CD8-positive, alpha-beta T cell (primary cell): ENCODE measurements at regions of chr6 and their contacts with region 1.

Region 1: GRCh38 chr6:35342258-35343091 is at the start of gene PPARD:
- DNase-seq: peak; percentile 93 to 99 (median 97)
- ATAC-seq: peak; percentile 99
- H3K4me3 ChIP-seq: peak within 1 kb of the TSS; percentile 52 to 57
- H3K4me3 Mint-ChIP-seq: peak within 1 kb of the TSS; percentile 87
- H3K27ac ChIP-seq: peak within 1 kb of the TSS; percentile 75 to 81
- H3K27ac Mint-ChIP-seq: peak within 1 kb of the TSS; percentile 94
- H3K4me1 ChIP-seq: peaks cover 43% of the 10 kb centered on the region
- H3K4me1 Mint-ChIP-seq: peaks cover 50% of the 10 kb centered on the region
- H3K27me3 ChIP-seq: no peaks in the 10 kb centered on the region
- H3K27me3 Mint-ChIP-seq: no peaks in the 10 kb centered on the region
- CTCF ChIP-seq: peak; percentile 90
- total RNA-seq, gene PPARD: 20.0 to 21.5 TPM

Region 2: DNA sequence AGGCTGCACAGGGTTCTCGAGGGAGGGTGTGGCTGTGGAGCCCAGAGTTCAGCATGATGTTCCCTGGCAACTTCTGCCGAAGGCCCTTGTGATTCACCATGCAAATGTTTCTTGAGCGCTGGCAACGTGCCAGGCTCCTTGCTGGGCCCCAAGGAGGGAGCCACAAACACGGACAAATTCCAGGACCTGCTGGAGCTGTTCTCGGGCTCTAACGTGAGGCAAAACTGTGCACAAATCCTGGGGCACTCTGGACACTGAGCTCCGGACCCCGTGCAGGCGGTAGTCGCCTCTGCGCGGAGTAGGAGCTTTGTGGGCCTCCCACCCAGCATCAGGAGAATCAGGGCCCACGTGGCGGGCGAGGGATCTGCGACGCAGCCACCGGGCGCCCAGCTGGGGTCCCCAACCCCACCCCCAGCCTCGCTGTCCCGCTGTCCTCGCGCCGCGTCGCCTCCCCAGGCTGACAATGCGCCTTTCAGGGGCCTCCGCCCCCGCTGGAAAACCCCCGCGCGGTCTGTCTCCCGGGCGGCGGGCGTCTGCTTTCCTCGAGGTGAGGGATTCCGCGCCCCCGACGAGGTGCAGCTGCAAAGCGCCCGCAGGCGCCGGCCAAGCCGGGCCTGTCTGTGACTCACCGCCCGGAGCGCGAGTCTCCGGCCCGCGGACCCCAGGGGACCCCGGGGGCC is 160.4 kb before region 1 on chr6:
- CTCF ChIA-PET with region 1: no interaction called
- POLR2A ChIA-PET with region 1: no interaction called
- intact Hi-C with region 1: no loop called
- DNase-seq: peak in 2 of 9 experiments; percentile 23 to 29
- ATAC-seq: no peak
- H3K4me3 ChIP-seq: no peak overlapping the region
- H3K4me3 Mint-ChIP-seq: no peak overlapping the region
- H3K27ac ChIP-seq: no peak overlapping the region
- H3K27ac Mint-ChIP-seq: no peak overlapping the region
- H3K4me1 ChIP-seq: no peaks in the 10 kb centered on the region
- H3K4me1 Mint-ChIP-seq: no peaks in the 10 kb centered on the region
- H3K27me3 ChIP-seq: no peaks in the 10 kb centered on the region
- H3K27me3 Mint-ChIP-seq: peaks cover 15% of the 10 kb centered on the region
- CTCF ChIP-seq: no peak

Region 3: DNA sequence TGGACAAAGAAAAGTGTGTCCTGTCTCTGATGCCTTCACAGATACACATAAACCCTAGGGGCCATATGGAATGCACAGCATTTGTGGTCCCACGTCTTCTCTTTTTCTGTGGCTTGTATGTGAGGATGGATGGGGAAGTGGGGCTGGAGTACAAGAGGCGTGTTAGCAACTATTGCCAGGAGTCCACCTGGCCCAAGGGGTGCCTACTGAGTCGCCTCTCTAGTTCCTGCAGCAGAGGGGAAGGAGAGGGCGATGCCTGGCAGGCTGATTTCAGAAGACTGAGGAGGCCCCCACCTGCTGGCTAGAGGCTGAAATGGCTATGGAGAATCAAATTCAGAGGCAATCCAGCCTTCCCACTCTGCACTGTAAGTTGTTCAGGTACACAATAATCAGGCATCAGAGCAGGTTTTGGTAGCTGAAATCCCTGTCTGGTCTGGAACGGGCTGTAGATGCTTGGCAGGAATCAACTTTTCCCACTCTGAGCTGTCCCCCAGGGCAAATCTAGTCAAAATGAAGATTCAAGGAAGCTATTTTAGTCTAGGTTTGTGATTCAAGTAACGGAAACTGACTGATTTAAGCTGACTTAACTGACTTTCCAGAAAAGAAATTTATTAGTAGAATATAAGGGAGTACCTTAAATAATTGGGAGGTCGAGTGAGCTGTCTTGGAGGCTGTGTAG is 15.0 kb before region 1 on chr6:
- CTCF ChIA-PET with region 1: interaction called, 14 read pairs
- POLR2A ChIA-PET with region 1: interaction called, 5 read pairs
- intact Hi-C with region 1: loop called in 1 of 2 experiments (anchors 1 kb)
- DNase-seq: peak; percentile 61 to 86 (median 82)
- ATAC-seq: peak; percentile 81
- H3K4me3 ChIP-seq: no peak overlapping the region
- H3K4me3 Mint-ChIP-seq: peak overlapping the region; percentile 42
- H3K27ac ChIP-seq: peak overlapping the region in 1 of 2 experiments; percentile 62
- H3K27ac Mint-ChIP-seq: peak overlapping the region; percentile 88
- H3K4me1 ChIP-seq: peaks cover 19% of the 10 kb centered on the region
- H3K4me1 Mint-ChIP-seq: peaks cover 21% of the 10 kb centered on the region
- H3K27me3 ChIP-seq: no peaks in the 10 kb centered on the region
- H3K27me3 Mint-ChIP-seq: no peaks in the 10 kb centered on the region
- CTCF ChIP-seq: peak; percentile 68

Region 4: DNA sequence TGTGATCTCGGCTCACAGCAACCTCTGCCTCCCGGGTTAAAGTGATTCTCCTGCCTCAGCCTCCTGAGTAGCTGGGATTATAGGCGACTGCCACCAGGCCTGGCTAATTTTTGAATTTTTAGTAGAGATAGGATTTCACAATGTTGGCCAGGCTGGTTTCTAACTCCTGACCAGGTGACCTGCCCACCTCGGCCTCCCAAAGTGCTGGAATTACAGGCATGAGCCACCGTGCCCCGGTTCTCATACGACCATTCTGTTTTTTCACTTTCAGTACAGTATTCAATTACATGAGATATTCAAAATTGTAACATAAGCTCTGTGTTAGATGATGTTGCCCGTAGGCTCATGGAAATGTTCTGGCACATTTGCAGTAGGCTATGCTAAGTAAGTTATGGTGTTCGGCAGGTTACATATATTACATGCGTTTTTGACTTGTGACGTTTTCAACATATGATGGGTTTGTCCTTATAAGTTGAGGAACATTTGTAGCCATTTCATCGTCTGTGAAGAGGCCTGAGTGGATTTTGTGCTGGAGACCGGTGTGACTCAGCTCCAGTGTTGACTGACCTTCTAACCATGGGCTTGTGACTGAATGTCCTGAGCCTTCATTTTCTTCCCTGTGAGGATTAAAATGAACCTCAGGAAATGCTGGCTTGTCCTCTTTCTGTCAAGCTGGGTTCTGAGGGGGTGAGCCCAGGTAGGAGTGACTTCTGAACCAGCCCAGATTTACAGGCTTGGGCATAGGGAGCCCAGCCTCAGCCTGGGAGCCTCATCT is 12.1 kb after region 1 on chr6:
- CTCF ChIA-PET with region 1: interaction called, 18 read pairs
- POLR2A ChIA-PET with region 1: interaction called, 4 read pairs
- intact Hi-C with region 1: no loop called
- DNase-seq: no peak
- ATAC-seq: no peak
- H3K4me3 ChIP-seq: no peak overlapping the region
- H3K4me3 Mint-ChIP-seq: no peak overlapping the region
- H3K27ac ChIP-seq: no peak overlapping the region
- H3K27ac Mint-ChIP-seq: no peak overlapping the region
- H3K4me1 ChIP-seq: peaks cover 27% of the 10 kb centered on the region
- H3K4me1 Mint-ChIP-seq: peaks cover 58% of the 10 kb centered on the region
- H3K27me3 ChIP-seq: no peaks in the 10 kb centered on the region
- H3K27me3 Mint-ChIP-seq: no peaks in the 10 kb centered on the region
- CTCF ChIP-seq: no peak

Region 5: DNA sequence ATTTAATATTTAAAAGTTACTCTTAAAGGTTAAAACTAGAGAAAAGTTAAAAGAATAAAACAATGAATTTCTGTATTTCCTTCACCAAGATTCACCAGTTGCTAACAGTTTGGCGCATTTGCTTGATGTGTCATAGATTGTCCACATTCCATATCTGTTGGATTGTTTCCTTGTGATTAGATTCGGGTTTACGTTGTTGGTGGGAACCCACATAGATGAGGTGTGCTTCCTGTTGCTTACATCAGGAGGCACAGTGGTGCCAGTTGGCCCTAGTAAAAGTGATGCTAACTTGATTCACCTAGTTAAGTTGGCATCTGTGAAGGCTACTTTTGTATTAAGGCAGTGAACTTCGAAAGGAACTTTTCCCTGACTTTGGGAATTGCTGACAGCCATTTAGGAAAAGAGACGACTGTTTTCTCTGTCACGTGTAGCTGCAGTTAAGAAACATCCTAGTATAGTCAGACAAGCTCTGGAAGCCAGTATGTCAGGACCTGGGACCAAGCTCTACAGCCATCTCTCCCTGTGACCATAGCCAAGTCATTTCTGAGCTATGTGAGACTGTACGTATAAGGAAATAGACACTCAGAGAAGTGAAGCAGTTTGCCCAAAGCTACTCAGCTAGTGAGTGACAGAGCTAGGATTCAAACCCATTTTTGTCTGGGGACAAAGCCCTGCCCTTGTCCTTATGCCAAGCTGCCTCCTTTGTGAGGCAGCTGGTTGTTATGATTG is 48.9 kb after region 1 on chr6:
- CTCF ChIA-PET with region 1: interaction called, 3 read pairs
- POLR2A ChIA-PET with region 1: no interaction called
- intact Hi-C with region 1: loop called in 1 of 2 experiments (anchors 10 kb)
- DNase-seq: peak in 3 of 9 experiments; percentile 17 to 64 (median 43)
- ATAC-seq: peak; percentile 83
- H3K4me3 ChIP-seq: no peak overlapping the region
- H3K4me3 Mint-ChIP-seq: no peak overlapping the region
- H3K27ac ChIP-seq: no peak overlapping the region
- H3K27ac Mint-ChIP-seq: peak overlapping the region; percentile 75
- H3K4me1 ChIP-seq: peaks cover 41% of the 10 kb centered on the region
- H3K4me1 Mint-ChIP-seq: peaks cover 65% of the 10 kb centered on the region
- H3K27me3 ChIP-seq: no peaks in the 10 kb centered on the region
- H3K27me3 Mint-ChIP-seq: no peaks in the 10 kb centered on the region
- CTCF ChIP-seq: no peak

Region 6: DNA sequence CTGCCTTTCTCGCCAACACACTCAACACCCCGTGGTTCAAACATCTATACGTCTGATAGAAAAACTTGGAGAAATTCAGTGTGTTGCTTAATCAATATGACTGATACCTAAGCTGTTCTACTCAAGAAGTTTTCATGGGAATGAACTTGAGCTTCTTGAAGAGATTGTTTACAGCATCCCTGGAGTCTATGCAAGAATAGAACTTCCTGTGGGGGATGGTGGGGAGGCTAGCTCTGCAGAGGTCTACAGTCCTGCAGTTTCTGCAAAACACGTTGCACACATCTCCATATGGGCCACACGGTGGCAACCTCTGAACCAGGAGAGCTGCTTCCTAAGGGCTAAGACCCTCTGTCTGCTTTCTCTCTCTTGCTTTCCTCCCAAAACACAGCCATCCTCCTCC is 76.9 kb after region 1 on chr6:
- CTCF ChIA-PET with region 1: interaction called, 22 read pairs
- POLR2A ChIA-PET with region 1: interaction called, 3 read pairs
- intact Hi-C with region 1: loop called in 1 of 2 experiments (anchors 2 kb)
- DNase-seq: peak in 3 of 9 experiments; percentile 21 to 57 (median 43)
- ATAC-seq: peak; percentile 56
- H3K4me3 ChIP-seq: no peak overlapping the region
- H3K4me3 Mint-ChIP-seq: peak overlapping the region; percentile 35
- H3K27ac ChIP-seq: peak overlapping the region in 1 of 2 experiments; percentile 21
- H3K27ac Mint-ChIP-seq: peak overlapping the region; percentile 74
- H3K4me1 ChIP-seq: peaks cover 30% of the 10 kb centered on the region
- H3K4me1 Mint-ChIP-seq: peaks cover 31% of the 10 kb centered on the region
- H3K27me3 ChIP-seq: no peaks in the 10 kb centered on the region
- H3K27me3 Mint-ChIP-seq: no peaks in the 10 kb centered on the region
- CTCF ChIP-seq: no peak

Region 7: DNA sequence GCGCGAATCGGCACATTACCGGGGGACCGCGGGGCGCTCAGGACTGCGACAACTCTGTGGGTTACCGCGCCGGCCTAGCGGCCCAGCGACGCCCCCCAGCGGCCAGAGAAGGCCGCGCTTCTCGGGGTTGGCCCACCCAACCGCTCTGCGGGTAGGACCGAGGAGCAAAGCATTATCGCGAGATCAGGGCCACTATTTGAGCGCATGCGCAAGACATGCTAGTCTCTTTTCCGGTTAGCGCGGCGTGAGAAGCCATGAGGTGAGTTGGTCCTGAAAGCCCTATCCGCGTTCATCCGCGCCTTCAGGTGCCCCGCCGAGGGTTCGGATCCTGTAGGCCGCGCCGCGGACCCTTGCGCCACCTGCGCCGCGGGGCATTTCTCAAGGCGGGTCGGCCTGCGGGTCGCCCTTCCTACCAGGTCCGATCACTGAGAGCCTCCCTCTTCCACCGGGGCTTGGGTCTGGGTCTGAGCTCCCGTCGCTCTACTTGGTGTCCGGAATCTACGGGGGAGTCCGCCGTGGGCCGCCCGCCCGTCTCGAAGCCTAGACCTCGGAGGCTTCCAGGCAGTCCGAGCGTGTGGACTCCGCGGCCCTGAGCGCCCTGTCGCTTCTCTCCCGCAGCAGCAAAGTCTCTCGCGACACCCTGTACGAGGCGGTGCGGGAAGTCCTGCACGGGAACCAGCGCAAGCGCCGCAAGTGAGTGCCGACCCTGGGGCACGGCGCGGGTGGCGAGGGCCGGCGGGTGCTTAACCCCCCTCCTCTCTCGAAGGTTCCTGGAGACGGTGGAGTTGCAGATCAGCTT is 125.9 kb after region 1 on chr6 and contains the start of gene RPL10A:
- CTCF ChIA-PET with region 1: interaction called, 63 read pairs
- POLR2A ChIA-PET with region 1: interaction called, 9 read pairs
- intact Hi-C with region 1: loop called (anchors 1 kb)
- DNase-seq: peak; percentile 90 to 99 (median 96)
- ATAC-seq: peak; percentile 88
- H3K4me3 ChIP-seq: peak within 1 kb of the TSS; percentile 74 to 100
- H3K4me3 Mint-ChIP-seq: peak within 1 kb of the TSS; percentile 96
- H3K27ac ChIP-seq: peak within 1 kb of the TSS; percentile 76 to 90
- H3K27ac Mint-ChIP-seq: peak within 1 kb of the TSS; percentile 99
- H3K4me1 ChIP-seq: peaks cover 26% of the 10 kb centered on the region
- H3K4me1 Mint-ChIP-seq: peaks cover 39% of the 10 kb centered on the region
- H3K27me3 ChIP-seq: no peaks in the 10 kb centered on the region
- H3K27me3 Mint-ChIP-seq: no peaks in the 10 kb centered on the region
- CTCF ChIP-seq: peak; percentile 90
- total RNA-seq, gene RPL10A: 2,275 to 2,367 TPM

Region 8: DNA sequence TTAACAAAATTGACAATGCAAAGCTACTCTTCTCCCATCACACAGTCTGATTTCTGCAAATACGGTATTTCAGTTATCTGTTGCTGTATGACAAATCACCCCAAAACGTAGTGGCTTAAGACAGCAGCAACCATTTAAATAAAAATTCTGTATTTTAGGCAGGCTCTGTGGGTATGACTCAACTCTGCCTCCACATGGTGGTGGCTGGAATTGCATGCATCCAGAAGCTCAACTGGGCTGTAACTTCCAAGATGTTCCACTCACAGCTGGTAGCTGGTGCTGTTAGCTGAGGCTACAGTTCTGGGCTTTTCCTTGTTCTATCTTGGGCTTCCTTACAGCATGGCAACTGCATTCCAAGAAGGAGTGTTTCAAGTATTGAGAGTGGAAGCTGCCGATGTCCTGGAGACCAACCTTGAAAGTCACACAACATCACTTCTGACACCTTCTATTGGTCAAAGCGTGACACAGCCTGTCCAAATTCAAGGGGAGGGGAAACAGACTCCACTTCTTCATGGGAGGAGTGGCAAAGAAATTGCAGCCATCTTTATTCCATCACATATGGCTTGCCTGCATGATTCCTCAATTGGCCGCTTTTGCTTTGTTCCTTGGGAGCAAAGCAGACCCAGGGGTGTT is 209.9 kb after region 1 on chr6:
- CTCF ChIA-PET with region 1: interaction called, 6 read pairs
- POLR2A ChIA-PET with region 1: no interaction called
- intact Hi-C with region 1: loop called (anchors 1 to 2 kb)
- DNase-seq: peak; percentile 31 to 78 (median 61)
- ATAC-seq: peak; percentile 86
- H3K4me3 ChIP-seq: no peak overlapping the region
- H3K4me3 Mint-ChIP-seq: no peak overlapping the region
- H3K27ac ChIP-seq: no peak overlapping the region
- H3K27ac Mint-ChIP-seq: no peak overlapping the region
- H3K4me1 ChIP-seq: no peaks in the 10 kb centered on the region
- H3K4me1 Mint-ChIP-seq: peaks cover 4% of the 10 kb centered on the region
- H3K27me3 ChIP-seq: no peaks in the 10 kb centered on the region
- H3K27me3 Mint-ChIP-seq: peaks cover 2% of the 10 kb centered on the region
- CTCF ChIP-seq: peak; percentile 95

Region 9: DNA sequence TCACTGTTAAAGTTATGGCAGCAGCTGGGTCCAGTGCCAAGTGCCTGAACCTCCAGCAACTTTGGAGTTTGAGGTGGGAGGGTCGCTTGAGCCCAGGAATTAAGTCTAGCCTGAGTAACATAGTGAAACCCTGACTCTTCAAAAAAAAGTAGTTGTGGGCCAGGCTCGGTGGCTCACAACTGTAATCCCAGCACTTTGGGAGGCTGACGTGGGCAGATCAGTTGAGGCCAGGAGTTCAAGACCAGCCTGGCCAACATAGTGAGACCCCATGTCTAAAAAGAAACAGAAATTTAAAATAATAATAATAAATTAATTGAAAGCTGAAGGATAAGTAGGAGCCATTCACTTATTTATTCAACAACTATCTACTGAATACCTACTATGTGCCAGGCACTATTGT is 312.4 kb after region 1 on chr6:
- CTCF ChIA-PET with region 1: no interaction called
- POLR2A ChIA-PET with region 1: no interaction called
- intact Hi-C with region 1: no loop called
- DNase-seq: no peak
- ATAC-seq: no peak
- H3K4me3 ChIP-seq: no peak overlapping the region
- H3K4me3 Mint-ChIP-seq: no peak overlapping the region
- H3K27ac ChIP-seq: no peak overlapping the region
- H3K27ac Mint-ChIP-seq: peak overlapping the region; percentile 88
- H3K4me1 ChIP-seq: peaks cover 23% of the 10 kb centered on the region
- H3K4me1 Mint-ChIP-seq: peaks cover 46% of the 10 kb centered on the region
- H3K27me3 ChIP-seq: no peaks in the 10 kb centered on the region
- H3K27me3 Mint-ChIP-seq: no peaks in the 10 kb centered on the region
- CTCF ChIP-seq: no peak

Region 10: GRCh38 chr6:35993150-35993549 is 650.7 kb after region 1 on chr6:
- CTCF ChIA-PET with region 1: no interaction called
- POLR2A ChIA-PET with region 1: no interaction called
- intact Hi-C with region 1: no loop called
- DNase-seq: no peak
- ATAC-seq: no peak
- H3K4me3 ChIP-seq: no peak overlapping the region
- H3K4me3 Mint-ChIP-seq: no peak overlapping the region
- H3K27ac ChIP-seq: no peak overlapping the region
- H3K27ac Mint-ChIP-seq: no peak overlapping the region
- H3K4me1 ChIP-seq: no peaks in the 10 kb centered on the region
- H3K4me1 Mint-ChIP-seq: no peaks in the 10 kb centered on the region
- H3K27me3 ChIP-seq: peaks cover 0 to 3% of the 10 kb centered on the region in 2 experiments
- H3K27me3 Mint-ChIP-seq: peaks cover 8% of the 10 kb centered on the region
- CTCF ChIP-seq: no peak

Region 11: GRCh38 chr6:36104836-36105235 is 762.4 kb after region 1 on chr6:
- CTCF ChIA-PET with region 1: no interaction called
- POLR2A ChIA-PET with region 1: no interaction called
- intact Hi-C with region 1: no loop called
- DNase-seq: no peak
- ATAC-seq: no peak
- H3K4me3 ChIP-seq: no peak overlapping the region
- H3K4me3 Mint-ChIP-seq: no peak overlapping the region
- H3K27ac ChIP-seq: no peak overlapping the region
- H3K27ac Mint-ChIP-seq: no peak overlapping the region
- H3K4me1 ChIP-seq: peaks cover 51% of the 10 kb centered on the region
- H3K4me1 Mint-ChIP-seq: peaks cover 65% of the 10 kb centered on the region
- H3K27me3 ChIP-seq: no peaks in the 10 kb centered on the region
- H3K27me3 Mint-ChIP-seq: no peaks in the 10 kb centered on the region
- CTCF ChIP-seq: no peak